ENCODE measurements at regions of chr7 and their contacts with region 1.

Region 1: GRCh38 chr7:103296901-103297836 is at the start of gene PMPCB:
- DNase-seq: peak; percentile 97
- H3K4me3 ChIP-seq: peak within 1 kb of the TSS; percentile 85
- H3K27ac ChIP-seq: peak within 1 kb of the TSS; percentile 62
- H3K4me1 ChIP-seq: peaks cover 5% of the 10 kb centered on the region
- H3K27me3 ChIP-seq: no peaks in the 10 kb centered on the region
- CTCF ChIP-seq: peak; percentile 93
- total RNA-seq, gene PMPCB: 56.4 to 80.5 TPM

Region 2: DNA sequence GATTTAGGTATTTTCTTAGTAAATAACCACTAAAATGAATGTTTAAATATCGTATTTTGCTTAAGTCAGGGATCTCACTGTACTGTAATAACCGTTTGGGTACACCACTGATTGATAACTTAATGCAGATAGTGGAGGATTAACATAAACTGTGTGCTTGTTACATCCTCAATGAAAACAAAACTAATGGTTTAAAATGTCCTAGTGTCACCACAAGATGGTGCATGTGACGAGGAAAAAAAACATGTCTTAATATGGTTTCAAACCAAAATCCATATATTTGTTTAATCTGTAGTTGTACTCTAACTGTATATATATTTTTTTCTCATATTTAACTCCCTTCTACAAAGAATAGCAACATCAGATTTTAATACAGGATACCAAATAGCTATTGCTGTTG is 203.1 kb before region 1 on chr7:
- intact Hi-C with region 1: loop called (anchors 2 kb)
- DNase-seq: no peak
- H3K4me3 ChIP-seq: no peak overlapping the region
- H3K27ac ChIP-seq: no peak overlapping the region
- H3K4me1 ChIP-seq: no peaks in the 10 kb centered on the region
- H3K27me3 ChIP-seq: no peaks in the 10 kb centered on the region
- CTCF ChIP-seq: peak; percentile 11

Region 3: DNA sequence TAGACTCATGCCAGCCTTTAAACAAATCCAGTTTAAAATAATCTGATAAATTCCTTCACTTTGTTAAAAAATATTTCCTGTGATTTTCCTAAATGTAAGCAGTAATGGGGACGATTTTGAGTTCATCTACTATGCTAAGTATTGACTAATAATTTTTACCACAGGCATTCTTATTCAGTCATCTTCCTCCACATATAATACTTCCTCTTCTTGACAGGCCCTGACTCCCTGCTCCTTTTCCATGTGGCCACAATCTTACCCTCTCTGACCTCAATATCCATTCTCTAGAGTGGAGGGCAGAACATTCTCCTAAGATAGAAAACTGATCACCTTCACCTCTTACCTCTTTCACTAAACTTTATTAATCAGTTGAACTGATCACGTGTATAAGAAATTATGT is 39.6 kb after region 1 on chr7:
- intact Hi-C with region 1: loop called (anchors 5 kb)
- DNase-seq: no peak
- H3K4me3 ChIP-seq: no peak overlapping the region
- H3K27ac ChIP-seq: no peak overlapping the region
- H3K4me1 ChIP-seq: no peaks in the 10 kb centered on the region
- H3K27me3 ChIP-seq: no peaks in the 10 kb centered on the region
- CTCF ChIP-seq: no peak

Region 4: DNA sequence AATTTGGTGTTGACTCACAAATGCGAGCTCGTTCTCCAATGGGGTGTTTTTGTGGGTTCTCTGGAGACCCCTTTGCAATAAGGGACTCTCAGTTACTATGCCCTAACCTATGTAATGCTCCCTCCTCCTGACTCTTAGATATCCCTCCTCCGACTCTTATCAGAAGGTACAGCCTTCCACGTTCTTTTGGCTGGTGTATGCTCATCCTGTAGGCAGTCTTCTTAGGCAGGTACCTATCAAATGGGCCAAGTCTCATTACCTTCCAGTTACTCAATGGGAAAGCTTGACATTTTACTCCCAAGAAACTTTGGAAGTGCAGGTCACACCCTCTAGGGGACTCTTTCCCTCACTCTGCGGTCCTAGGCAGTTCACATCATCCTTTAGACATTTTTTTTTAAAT is 116.2 kb after region 1 on chr7:
- intact Hi-C with region 1: loop called (anchors 5 kb)
- DNase-seq: no peak
- H3K4me3 ChIP-seq: no peak overlapping the region
- H3K27ac ChIP-seq: no peak overlapping the region
- H3K4me1 ChIP-seq: no peaks in the 10 kb centered on the region
- H3K27me3 ChIP-seq: no peaks in the 10 kb centered on the region
- CTCF ChIP-seq: no peak